Endothelial cell of umbilical vein (primary cell): ENCODE measurements at regions of chr2 and their contacts with region 1.

Region 1: GRCh38 chr2:157830696-157831570 is 45.2 kb downstream of the ACVR1 start:
- DNase-seq: peak; percentile 92
- H3K4me3 ChIP-seq: no peak overlapping the region
- H3K27ac ChIP-seq: peak overlapping the region; percentile 93
- H3K4me1 ChIP-seq: peaks cover 16% of the 10 kb centered on the region
- H3K27me3 ChIP-seq: no peaks in the 10 kb centered on the region
- CTCF ChIP-seq: no peak
- POLR2A ChIP-seq: no peak

Region 2: DNA sequence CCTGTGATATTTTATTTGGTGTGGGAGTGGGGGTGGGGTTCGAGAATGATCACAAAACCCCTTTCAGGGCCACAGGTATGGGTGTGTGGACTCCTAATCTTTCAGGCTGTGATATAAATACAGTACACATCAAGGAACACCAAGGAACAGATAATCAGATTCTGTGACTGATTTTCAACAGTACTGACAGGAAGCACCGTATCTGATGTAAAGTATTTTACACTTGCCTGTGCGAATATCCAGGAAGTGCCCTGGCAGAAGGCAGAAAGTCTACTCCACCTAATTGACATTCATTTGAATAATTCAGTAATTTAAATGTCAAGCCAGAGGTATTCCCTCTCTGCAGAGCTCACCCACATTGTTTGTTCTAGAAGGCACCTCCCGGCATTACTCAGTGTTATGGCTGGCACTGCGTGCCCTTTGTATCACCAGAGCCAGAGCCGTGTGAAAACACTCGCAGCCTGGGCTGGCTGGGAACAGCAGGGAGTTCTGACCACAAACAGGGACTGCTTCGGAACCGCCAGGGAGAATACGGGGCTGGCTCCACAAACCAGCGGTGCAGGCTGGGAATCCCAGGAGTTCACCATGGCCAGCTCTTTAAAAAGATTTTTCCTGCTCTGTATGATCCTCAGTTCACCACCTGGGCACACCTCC is 46.6 kb before region 1 on chr2:
- CTCF ChIA-PET with region 1: no interaction called
- POLR2A ChIA-PET with region 1: no interaction called
- dilution Hi-C with region 1: no loop called
- intact Hi-C with region 1: loop called (anchors 2 kb)
- DNase-seq: peak; percentile 82
- H3K4me3 ChIP-seq: no peak overlapping the region
- H3K27ac ChIP-seq: peak overlapping the region; percentile 44
- H3K4me1 ChIP-seq: peaks cover 40% of the 10 kb centered on the region
- H3K27me3 ChIP-seq: no peaks in the 10 kb centered on the region
- CTCF ChIP-seq: no peak
- POLR2A ChIP-seq: no peak

Region 3: GRCh38 chr2:157815421-157815820 is 15.5 kb before region 1 on chr2:
- CTCF ChIA-PET with region 1: interaction called, 3 read pairs
- POLR2A ChIA-PET with region 1: no interaction called
- dilution Hi-C with region 1: no loop called
- intact Hi-C with region 1: loop called (anchors 2 kb)
- DNase-seq: peak; percentile 25
- H3K4me3 ChIP-seq: no peak overlapping the region
- H3K27ac ChIP-seq: no peak overlapping the region
- H3K4me1 ChIP-seq: peaks cover 26% of the 10 kb centered on the region
- H3K27me3 ChIP-seq: no peaks in the 10 kb centered on the region
- CTCF ChIP-seq: no peak
- POLR2A ChIP-seq: no peak